ENCODE measurements at regions of chr3 and their contacts with region 1.

Region 1: GRCh38 chr3:138426226-138426625 is 8.2 kb upstream of the ESYT3 start:
- H3K4me3 Mint-ChIP-seq: no peak overlapping the region
- H3K27ac Mint-ChIP-seq: no peak overlapping the region
- H3K4me1 Mint-ChIP-seq: no peaks in the 10 kb centered on the region
- H3K27me3 Mint-ChIP-seq: peaks cover 19% of the 10 kb centered on the region

Region 2: GRCh38 chr3:138245026-138245425 is 181.2 kb before region 1 on chr3:
- intact Hi-C with region 1: no loop called
- H3K4me3 Mint-ChIP-seq: no peak overlapping the region
- H3K27ac Mint-ChIP-seq: no peak overlapping the region
- H3K4me1 Mint-ChIP-seq: no peaks in the 10 kb centered on the region
- H3K27me3 Mint-ChIP-seq: no peaks in the 10 kb centered on the region

Region 3: GRCh38 chr3:138329127-138329983 is 96.9 kb before region 1 on chr3 and contains the start of gene NME9:
- intact Hi-C with region 1: loop called (anchors 1 kb)
- H3K4me3 Mint-ChIP-seq: peak within 1 kb of the TSS; percentile 71
- H3K27ac Mint-ChIP-seq: peak within 1 kb of the TSS; percentile 56
- H3K4me1 Mint-ChIP-seq: peaks cover 18% of the 10 kb centered on the region
- H3K27me3 Mint-ChIP-seq: peaks cover 29% of the 10 kb centered on the region

Region 4: GRCh38 chr3:138608322-138609135 is 182.3 kb after region 1 on chr3 and contains the start of gene FAIM:
- intact Hi-C with region 1: no loop called
- H3K4me3 Mint-ChIP-seq: peak within 1 kb of the TSS; percentile 79
- H3K27ac Mint-ChIP-seq: peak within 1 kb of the TSS; percentile 79
- H3K4me1 Mint-ChIP-seq: peaks cover 23% of the 10 kb centered on the region
- H3K27me3 Mint-ChIP-seq: peaks cover 12% of the 10 kb centered on the region

Measured in dendritic cell treated with granulocyte-macrophage colony-stimulating factor and Interleukin-4, amounts not matched to agents 40 ng/mL and 50 ng/mL, for 4 days (primary cell).